Dorsolateral prefrontal cortex (tissue), 120 donors: ENCODE measurements at regions of chr5 and their contacts with region 1.

Region 1: DNA sequence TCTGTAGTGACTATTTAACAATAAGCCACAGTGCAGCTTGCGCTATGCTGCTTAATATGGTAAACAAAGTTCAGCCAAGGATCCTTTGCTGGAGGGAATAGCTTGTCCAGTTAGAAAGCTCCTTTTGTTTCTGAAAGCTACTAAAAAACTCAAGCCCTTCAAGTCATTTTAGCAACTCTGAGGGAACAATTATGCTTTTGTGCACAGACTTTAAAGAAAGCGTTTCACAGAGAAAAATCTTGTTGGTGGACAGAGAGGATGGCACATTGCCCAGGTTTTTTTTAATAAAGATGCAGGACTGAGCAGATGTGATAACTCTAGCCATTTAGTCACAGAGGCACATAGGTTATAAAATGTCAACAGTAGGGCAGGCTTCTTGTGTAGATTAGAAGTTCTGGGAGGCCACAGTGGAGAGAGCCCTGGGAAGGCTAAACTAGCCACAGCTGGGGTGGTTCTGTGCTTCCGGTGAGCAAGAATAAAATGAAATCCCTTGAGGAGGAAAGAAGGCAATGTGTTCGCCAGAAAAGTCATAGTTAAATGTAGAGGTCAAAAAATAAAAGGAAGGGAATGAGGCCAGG is 63.4 kb downstream of the ALDH7A1 start:
- DNase-seq: no peak
- H3K4me3 ChIP-seq: peak overlapping the region in 6 of 59 donors; percentile 2 to 28 (median 14)
- H3K27ac ChIP-seq: peak overlapping the region; percentile 2 to 91 (median 79)
- H3K27me3 ChIP-seq: no peaks in the 10 kb centered on the region
- CTCF ChIP-seq: peak in 1 of 56 donors; percentile 21

Region 2: GRCh38 chr5:126449751-126450271 is 81.8 kb before region 1 on chr5:
- intact Hi-C with region 1: loop called in 1 of 2 experiments (anchors 10 kb)
- DNase-seq: no peak
- H3K4me3 ChIP-seq: peak overlapping the region in 26 of 59 donors; percentile 1 to 39 (median 12)
- H3K27ac ChIP-seq: peak overlapping the region; percentile 19 to 98 (median 90)
- H3K27me3 ChIP-seq: no peaks in the 10 kb centered on the region
- CTCF ChIP-seq: peak in 1 of 56 donors; percentile 7

Region 3: GRCh38 chr5:127875235-127876021 is 1343.8 kb after region 1 on chr5:
- intact Hi-C with region 1: no loop called
- DNase-seq: peak in 9 of 10 donors; percentile 26 to 80 (median 54)
- H3K4me3 ChIP-seq: peak overlapping the region in 12 of 59 donors; percentile 2 to 36 (median 14)
- H3K27ac ChIP-seq: peak overlapping the region in 44 of 59 donors; percentile 2 to 78 (median 45)
- H3K27me3 ChIP-seq: no peaks in the 10 kb centered on the region
- CTCF ChIP-seq: peak; percentile 12 to 76 (median 56)